SK-N-SH (cell line): ENCODE measurements at regions of chr2 and their contacts with region 1.

Region 1: GRCh38 chr2:1750933-1751766 is 6.8 kb upstream of the PXDN start:
- DNase-seq: peak; percentile 91
- H3K4me3 ChIP-seq: no peak overlapping the region; a peak in 1 of 4 replicates
- H3K27ac ChIP-seq: no peak overlapping the region
- H3K4me1 ChIP-seq: peaks cover 4 to 13% of the 10 kb centered on the region in 2 experiments; a peak in 2 of 4 replicates
- H3K27me3 ChIP-seq: no peaks in the 10 kb centered on the region
- CTCF ChIP-seq: peak; percentile 94
- EP300 ChIP-seq: no peak
- RAD21 ChIP-seq: peak; percentile 90

Region 2: DNA sequence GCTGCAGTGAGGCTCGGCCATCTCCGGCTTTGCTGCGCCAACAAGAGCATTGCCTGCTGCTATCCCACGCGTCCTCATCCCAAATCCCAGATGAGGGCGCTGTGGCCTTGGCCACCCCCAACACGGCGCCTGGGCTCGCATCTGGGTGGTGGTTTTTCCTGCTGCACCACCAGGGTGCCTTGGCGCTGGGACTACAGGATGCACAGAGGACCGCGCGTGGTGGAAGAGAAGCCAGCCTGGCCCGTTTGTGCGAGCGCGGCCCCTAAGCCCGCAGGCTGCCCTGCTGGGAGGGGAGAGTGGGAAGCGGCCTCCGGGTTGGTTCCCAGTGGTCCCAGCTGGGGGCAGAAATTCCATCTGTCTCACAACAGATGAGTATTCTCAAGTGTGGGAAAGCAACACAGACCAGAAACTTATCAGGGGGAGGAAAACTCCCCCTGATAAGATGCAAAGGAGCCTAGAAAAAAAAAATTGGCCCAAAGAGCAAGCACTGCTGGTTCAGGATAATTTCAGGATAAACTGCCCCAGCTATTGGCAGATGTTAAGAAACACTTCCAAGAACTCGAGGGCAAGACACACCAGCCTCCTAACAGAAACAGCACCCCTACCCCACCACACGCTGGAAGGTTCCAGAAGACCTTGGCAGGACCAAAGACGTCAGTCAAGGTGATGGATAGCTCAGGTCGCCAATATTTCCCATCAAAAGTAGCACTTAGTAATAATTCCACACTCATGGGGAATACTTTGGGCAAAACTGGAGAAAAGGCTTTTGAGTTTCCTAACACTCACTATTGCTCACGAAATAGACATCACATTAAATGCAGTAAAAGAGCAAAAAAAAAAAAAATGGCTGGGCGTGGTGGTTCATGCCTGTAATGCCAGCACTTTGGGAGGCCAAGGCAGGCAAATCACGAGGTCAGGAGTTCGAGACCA is 158.9 kb before region 1 on chr2:
- CTCF ChIA-PET with region 1: interaction called, 122 read pairs
- POLR2A ChIA-PET with region 1: interaction called, 5 read pairs
- DNase-seq: peak; percentile 83
- H3K4me3 ChIP-seq: no peak overlapping the region
- H3K27ac ChIP-seq: no peak overlapping the region
- H3K4me1 ChIP-seq: peaks cover 14 to 44% of the 10 kb centered on the region in 2 experiments; a peak in 2 of 4 replicates
- H3K27me3 ChIP-seq: no peaks in the 10 kb centered on the region
- CTCF ChIP-seq: peak; percentile 50
- EP300 ChIP-seq: 0 out of 4 replicates have a peak, but pooled peaks of 1 of the 2 experiments have one; percentile 8
- RAD21 ChIP-seq: peak; percentile 75

Region 3: GRCh38 chr2:1665745-1666505 is 85.2 kb before region 1 on chr2:
- CTCF ChIA-PET with region 1: interaction called, 20 read pairs
- POLR2A ChIA-PET with region 1: no interaction called
- DNase-seq: no peak
- H3K4me3 ChIP-seq: no peak overlapping the region
- H3K27ac ChIP-seq: peak overlapping the region in 1 of 2 experiments; percentile 54; a peak in 1 of 4 replicates
- H3K4me1 ChIP-seq: peaks cover 0 to 21% of the 10 kb centered on the region in 2 experiments; a peak in 1 of 4 replicates
- H3K27me3 ChIP-seq: no peaks in the 10 kb centered on the region
- CTCF ChIP-seq: no peak
- EP300 ChIP-seq: no peak
- RAD21 ChIP-seq: no peak

Region 4: GRCh38 chr2:1685957-1686784 is 65.0 kb before region 1 on chr2:
- CTCF ChIA-PET with region 1: interaction called, 16 read pairs
- POLR2A ChIA-PET with region 1: no interaction called
- DNase-seq: no peak
- H3K4me3 ChIP-seq: no peak overlapping the region
- H3K27ac ChIP-seq: peak overlapping the region; percentile 40 to 53; a peak in 3 of 4 replicates
- H3K4me1 ChIP-seq: peaks cover 22 to 36% of the 10 kb centered on the region in 2 experiments
- H3K27me3 ChIP-seq: no peaks in the 10 kb centered on the region
- CTCF ChIP-seq: no peak
- EP300 ChIP-seq: no peak
- RAD21 ChIP-seq: no peak

Region 5: DNA sequence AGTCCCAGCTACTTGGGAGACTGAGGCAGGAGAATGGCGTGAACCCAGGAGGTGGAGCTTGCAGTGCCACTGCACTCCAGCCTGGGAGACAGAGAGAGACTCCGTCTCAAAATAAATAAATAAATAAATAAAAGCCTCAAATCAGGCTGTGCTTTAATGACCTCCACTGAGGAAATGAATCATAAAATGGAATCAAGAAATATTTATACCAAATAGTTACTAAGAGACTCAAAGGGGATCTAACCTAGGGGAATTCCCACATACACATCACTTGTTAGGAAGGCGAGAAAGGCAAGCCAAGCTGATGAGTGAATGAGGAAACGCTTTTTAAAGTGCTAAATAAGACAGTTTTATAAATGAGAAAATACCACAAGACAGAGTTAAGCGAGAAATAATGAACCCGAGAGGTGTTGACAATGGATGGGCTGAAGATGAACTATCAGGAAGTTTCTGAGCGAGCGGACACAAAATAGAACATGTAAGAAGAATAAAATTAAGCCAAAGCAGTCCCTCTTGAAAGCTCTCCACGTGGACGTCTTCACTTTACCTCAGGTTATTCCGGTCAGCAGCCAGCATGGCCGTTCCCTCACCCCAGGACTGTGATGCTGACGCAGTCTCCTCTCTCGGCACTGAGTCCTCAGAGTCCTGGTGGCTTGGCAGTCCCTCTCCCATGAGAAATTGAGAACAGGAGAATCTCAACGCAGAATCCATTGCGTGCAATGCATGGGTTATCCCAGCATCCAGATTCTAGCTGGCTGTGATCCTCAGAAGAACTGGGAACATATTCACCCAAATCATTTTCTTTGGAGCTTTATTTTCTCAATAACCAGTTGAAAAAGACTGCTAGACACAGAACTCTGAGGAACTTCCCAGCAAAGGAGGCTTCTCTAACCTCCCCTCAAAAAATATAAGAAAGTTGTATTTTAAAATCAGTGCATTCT is 29.2 kb before region 1 on chr2:
- CTCF ChIA-PET with region 1: interaction called, 11 read pairs
- POLR2A ChIA-PET with region 1: no interaction called
- DNase-seq: peak; percentile 35
- H3K4me3 ChIP-seq: peak overlapping the region in 1 of 2 experiments; percentile 54; a peak in 1 of 4 replicates
- H3K27ac ChIP-seq: peak overlapping the region; percentile 87 to 100
- H3K4me1 ChIP-seq: peaks cover 22 to 43% of the 10 kb centered on the region in 2 experiments
- H3K27me3 ChIP-seq: no peaks in the 10 kb centered on the region
- CTCF ChIP-seq: no peak
- EP300 ChIP-seq: peak in 1 of 2 experiments; percentile 38; a peak in 1 of 4 replicates
- RAD21 ChIP-seq: no peak

Region 6: GRCh38 chr2:1736997-1737480 is 14.1 kb before region 1 on chr2:
- CTCF ChIA-PET with region 1: interaction called, 47 read pairs
- POLR2A ChIA-PET with region 1: interaction called, 4 read pairs
- DNase-seq: peak; percentile 80
- H3K4me3 ChIP-seq: peak overlapping the region; percentile 10 to 32
- H3K27ac ChIP-seq: peak overlapping the region; percentile 91 to 97
- H3K4me1 ChIP-seq: peaks cover 51 to 70% of the 10 kb centered on the region in 2 experiments
- H3K27me3 ChIP-seq: no peaks in the 10 kb centered on the region
- CTCF ChIP-seq: no peak
- EP300 ChIP-seq: peak; percentile 18 to 73; a peak in 3 of 4 replicates
- RAD21 ChIP-seq: no peak

Region 7: GRCh38 chr2:1781271-1782080 is 30.3 kb after region 1 on chr2:
- CTCF ChIA-PET with region 1: interaction called, 10 read pairs
- POLR2A ChIA-PET with region 1: no interaction called
- DNase-seq: no peak
- H3K4me3 ChIP-seq: no peak overlapping the region
- H3K27ac ChIP-seq: no peak overlapping the region
- H3K4me1 ChIP-seq: no peaks in the 10 kb centered on the region; a peak in 1 of 4 replicates
- H3K27me3 ChIP-seq: 0 out of 2 replicates have a peak, but pooled peaks cover 10% of the 10 kb centered on the region
- CTCF ChIP-seq: no peak
- EP300 ChIP-seq: no peak
- RAD21 ChIP-seq: no peak

Region 8: DNA sequence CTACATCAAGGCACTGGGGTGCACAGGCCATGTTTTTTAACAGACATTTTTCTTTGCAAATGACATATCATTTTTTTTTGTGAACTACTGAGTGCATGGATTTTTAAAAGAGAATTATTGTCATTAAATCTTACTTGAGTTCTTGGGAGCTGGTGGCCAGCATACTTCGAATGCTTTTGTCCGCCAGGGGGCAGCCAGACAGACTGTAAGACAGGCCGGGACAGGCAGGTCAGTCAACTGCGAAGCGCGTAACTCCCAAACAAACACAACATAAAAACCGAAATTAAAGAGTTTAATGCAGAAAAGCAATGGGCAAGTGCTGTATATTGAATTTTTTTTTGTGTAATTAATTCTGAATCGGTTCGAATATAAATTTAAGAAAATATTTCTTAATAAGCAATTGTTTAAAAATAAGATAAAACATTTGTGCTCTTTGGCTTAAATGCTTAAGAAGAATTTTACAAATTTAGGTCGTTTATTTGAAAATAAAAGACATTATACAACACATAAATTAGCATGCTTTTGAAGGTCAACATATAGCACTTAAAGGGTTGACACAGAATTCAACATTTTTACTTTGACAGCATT is 135.3 kb after region 1 on chr2:
- CTCF ChIA-PET with region 1: no interaction called
- POLR2A ChIA-PET with region 1: no interaction called
- DNase-seq: peak; percentile 83
- H3K4me3 ChIP-seq: peak overlapping the region in 1 of 2 experiments; percentile 19; a peak in 1 of 4 replicates
- H3K27ac ChIP-seq: no peak overlapping the region
- H3K4me1 ChIP-seq: peaks cover 0 to 6% of the 10 kb centered on the region in 2 experiments; a peak in 1 of 4 replicates
- H3K27me3 ChIP-seq: no peaks in the 10 kb centered on the region
- CTCF ChIP-seq: peak; percentile 88
- EP300 ChIP-seq: no peak
- RAD21 ChIP-seq: peak; percentile 73

Region 9: DNA sequence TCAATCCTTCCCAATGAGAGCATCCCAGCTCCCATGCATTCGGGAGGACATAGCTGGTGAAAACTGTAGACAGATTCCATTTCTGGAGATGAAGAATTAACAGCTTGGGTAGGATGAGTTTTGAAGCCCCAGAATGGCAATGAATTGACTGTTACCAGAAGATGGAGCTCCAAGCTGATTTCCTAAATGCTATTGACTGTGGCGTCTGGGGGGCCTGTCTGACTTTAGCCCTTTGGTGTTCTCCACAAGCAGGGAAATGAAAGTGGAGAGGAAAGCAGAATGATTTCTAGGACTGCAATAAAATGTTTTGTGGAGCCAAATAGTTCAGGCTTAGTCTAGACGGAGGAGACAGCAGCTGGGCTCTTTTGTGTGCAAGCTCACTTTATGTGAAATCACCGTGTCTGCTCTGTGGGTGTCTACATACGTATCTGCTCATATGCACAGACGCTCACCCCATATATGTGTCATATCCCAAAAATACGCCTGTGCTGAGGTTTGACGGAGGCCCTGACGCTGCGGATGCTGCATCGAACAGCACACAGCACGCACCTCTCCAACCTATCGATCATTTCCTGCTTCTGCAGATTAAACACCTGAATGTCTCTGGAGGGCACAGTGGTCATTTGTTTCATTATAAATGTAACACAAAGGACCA is 159.6 kb after region 1 on chr2:
- CTCF ChIA-PET with region 1: no interaction called
- POLR2A ChIA-PET with region 1: no interaction called
- DNase-seq: peak; percentile 61
- H3K4me3 ChIP-seq: no peak overlapping the region
- H3K27ac ChIP-seq: peak overlapping the region in 1 of 2 experiments; percentile 4; a peak in 1 of 4 replicates
- H3K4me1 ChIP-seq: peaks cover 0 to 25% of the 10 kb centered on the region in 2 experiments; a peak in 1 of 4 replicates
- H3K27me3 ChIP-seq: no peaks in the 10 kb centered on the region
- CTCF ChIP-seq: no peak; the same call in 1 of the 2 replicates
- EP300 ChIP-seq: no peak
- RAD21 ChIP-seq: peak; percentile 68